ENCODE measurements at regions of chr10 and their contacts with region 1.

Region 1: GRCh38 chr10:58384999-58385783 is at the start of gene TFAM:
- DNase-seq: peak; percentile 98
- ATAC-seq: peak; percentile 91
- H3K4me3 Mint-ChIP-seq: peak within 1 kb of the TSS; percentile 100
- H3K27ac Mint-ChIP-seq: peak within 1 kb of the TSS; percentile 97
- H3K4me1 Mint-ChIP-seq: peaks cover 44% of the 10 kb centered on the region
- H3K27me3 Mint-ChIP-seq: no peaks in the 10 kb centered on the region
- total RNA-seq, gene TFAM: 108 to 112 TPM

Region 2: DNA sequence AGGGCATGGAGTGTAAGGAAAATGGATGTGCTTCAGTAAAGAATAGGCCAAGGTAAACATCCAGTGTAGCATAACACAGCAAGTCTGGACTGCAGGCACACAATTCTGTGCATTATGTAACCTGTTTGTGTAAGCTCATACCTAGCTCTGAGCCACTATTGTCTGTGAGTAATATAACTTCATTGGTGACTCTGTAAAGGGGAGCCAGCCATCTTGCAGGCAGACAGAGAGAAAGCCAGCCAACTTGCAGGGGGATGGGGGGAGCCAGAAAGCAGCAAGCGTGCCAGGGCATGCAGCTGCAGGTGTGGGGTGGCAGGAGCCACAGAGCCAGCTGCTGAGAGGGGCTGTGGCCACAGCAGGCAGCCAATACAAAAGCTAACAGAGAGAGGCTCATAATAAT is 566.7 kb before region 1 on chr10:
- CTCF ChIA-PET with region 1: no interaction called
- POLR2A ChIA-PET with region 1: no interaction called
- intact Hi-C with region 1: no loop called
- DNase-seq: no peak
- ATAC-seq: no peak
- H3K4me3 Mint-ChIP-seq: no peak overlapping the region
- H3K27ac Mint-ChIP-seq: no peak overlapping the region
- H3K4me1 Mint-ChIP-seq: no peaks in the 10 kb centered on the region
- H3K27me3 Mint-ChIP-seq: no peaks in the 10 kb centered on the region

Region 3: GRCh38 chr10:58177362-58177947 is 207.7 kb before region 1 on chr10:
- CTCF ChIA-PET with region 1: interaction called, 11 read pairs
- POLR2A ChIA-PET with region 1: no interaction called
- intact Hi-C with region 1: loop called (anchors 2 to 5 kb)
- DNase-seq: no peak
- ATAC-seq: no peak
- H3K4me3 Mint-ChIP-seq: no peak overlapping the region
- H3K27ac Mint-ChIP-seq: no peak overlapping the region
- H3K4me1 Mint-ChIP-seq: no peaks in the 10 kb centered on the region
- H3K27me3 Mint-ChIP-seq: peaks cover 2% of the 10 kb centered on the region

Region 4: GRCh38 chr10:58282615-58283014 is 102.6 kb before region 1 on chr10:
- CTCF ChIA-PET with region 1: no interaction called
- POLR2A ChIA-PET with region 1: no interaction called
- intact Hi-C with region 1: loop called in 1 of 2 experiments (anchors 1 kb)
- DNase-seq: peak; percentile 50
- ATAC-seq: peak; percentile 87
- H3K4me3 Mint-ChIP-seq: peak overlapping the region; percentile 6
- H3K27ac Mint-ChIP-seq: peak overlapping the region; percentile 78
- H3K4me1 Mint-ChIP-seq: peaks cover 40% of the 10 kb centered on the region
- H3K27me3 Mint-ChIP-seq: no peaks in the 10 kb centered on the region

Region 5: GRCh38 chr10:58299580-58299979 is 85.6 kb before region 1 on chr10:
- CTCF ChIA-PET with region 1: interaction called, 14 read pairs
- POLR2A ChIA-PET with region 1: no interaction called
- intact Hi-C with region 1: loop called (anchors 1 kb)
- DNase-seq: peak; percentile 74
- ATAC-seq: peak; percentile 87
- H3K4me3 Mint-ChIP-seq: no peak overlapping the region
- H3K27ac Mint-ChIP-seq: no peak overlapping the region
- H3K4me1 Mint-ChIP-seq: peaks cover 2% of the 10 kb centered on the region
- H3K27me3 Mint-ChIP-seq: peaks cover 6% of the 10 kb centered on the region

Region 6: DNA sequence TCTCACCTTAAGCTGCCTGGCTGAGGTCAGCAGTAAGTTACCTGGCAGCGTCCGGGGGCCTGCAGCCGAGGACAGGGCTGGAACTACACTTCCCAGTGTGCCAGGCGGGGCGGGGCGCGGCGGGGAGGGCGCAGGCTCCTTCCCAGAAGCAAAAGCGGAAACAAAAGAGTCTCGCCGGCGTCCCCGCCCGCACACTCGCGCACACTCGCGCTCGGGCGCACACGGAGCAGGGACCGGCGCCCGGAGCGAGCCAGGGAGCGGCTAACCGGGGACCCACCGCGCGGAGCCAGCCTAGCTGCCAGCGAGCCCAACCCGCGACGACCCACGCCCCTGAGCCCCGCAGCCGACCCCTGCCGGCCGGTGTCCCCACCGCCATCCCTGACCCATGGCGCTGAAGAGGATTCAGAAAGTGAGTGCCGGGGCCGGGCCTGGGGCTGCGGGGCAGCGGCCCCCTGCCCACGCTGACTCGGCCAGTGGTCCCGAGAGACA is 50.3 kb before region 1 on chr10 and contains the start of gene UBE2D1:
- CTCF ChIA-PET with region 1: interaction called, 9 read pairs
- POLR2A ChIA-PET with region 1: interaction called, 3 read pairs
- intact Hi-C with region 1: loop called (anchors 1 kb)
- DNase-seq: peak; percentile 92
- ATAC-seq: peak; percentile 97
- H3K4me3 Mint-ChIP-seq: peak within 1 kb of the TSS; percentile 87
- H3K27ac Mint-ChIP-seq: peak within 1 kb of the TSS; percentile 87
- H3K4me1 Mint-ChIP-seq: peaks cover 36% of the 10 kb centered on the region
- H3K27me3 Mint-ChIP-seq: peaks cover 7% of the 10 kb centered on the region
- total RNA-seq, gene UBE2D1: 12.7 to 15.3 TPM

Region 7: GRCh38 chr10:58396057-58396456 is 10.9 kb after region 1 on chr10:
- CTCF ChIA-PET with region 1: interaction called, 11 read pairs
- POLR2A ChIA-PET with region 1: no interaction called
- intact Hi-C with region 1: no loop called
- DNase-seq: no peak
- ATAC-seq: no peak
- H3K4me3 Mint-ChIP-seq: no peak overlapping the region
- H3K27ac Mint-ChIP-seq: no peak overlapping the region
- H3K4me1 Mint-ChIP-seq: peaks cover 9% of the 10 kb centered on the region
- H3K27me3 Mint-ChIP-seq: no peaks in the 10 kb centered on the region

Region 8: GRCh38 chr10:58980826-58981415 is 595.7 kb after region 1 on chr10:
- CTCF ChIA-PET with region 1: no interaction called
- POLR2A ChIA-PET with region 1: no interaction called
- intact Hi-C with region 1: no loop called
- DNase-seq: no peak
- ATAC-seq: no peak
- H3K4me3 Mint-ChIP-seq: no peak overlapping the region
- H3K27ac Mint-ChIP-seq: no peak overlapping the region
- H3K4me1 Mint-ChIP-seq: no peaks in the 10 kb centered on the region
- H3K27me3 Mint-ChIP-seq: peaks cover 3% of the 10 kb centered on the region